Activated CD8-positive, alpha-beta T cell treated with anti-CD3 and anti-CD28 coated beads for 36 hours (primary cell): ENCODE measurements at regions of chr10 and their contacts with region 1.

Region 1: GRCh38 chr10:74035303-74035702 is 37.4 kb downstream of the VCL start:
- DNase-seq: no peak
- ATAC-seq: no peak
- H3K4me3 Mint-ChIP-seq: no peak overlapping the region
- H3K27ac Mint-ChIP-seq: no peak overlapping the region
- H3K4me1 Mint-ChIP-seq: peaks cover 22% of the 10 kb centered on the region
- H3K27me3 Mint-ChIP-seq: no peaks in the 10 kb centered on the region
- CTCF ChIP-seq: no peak

Region 2: DNA sequence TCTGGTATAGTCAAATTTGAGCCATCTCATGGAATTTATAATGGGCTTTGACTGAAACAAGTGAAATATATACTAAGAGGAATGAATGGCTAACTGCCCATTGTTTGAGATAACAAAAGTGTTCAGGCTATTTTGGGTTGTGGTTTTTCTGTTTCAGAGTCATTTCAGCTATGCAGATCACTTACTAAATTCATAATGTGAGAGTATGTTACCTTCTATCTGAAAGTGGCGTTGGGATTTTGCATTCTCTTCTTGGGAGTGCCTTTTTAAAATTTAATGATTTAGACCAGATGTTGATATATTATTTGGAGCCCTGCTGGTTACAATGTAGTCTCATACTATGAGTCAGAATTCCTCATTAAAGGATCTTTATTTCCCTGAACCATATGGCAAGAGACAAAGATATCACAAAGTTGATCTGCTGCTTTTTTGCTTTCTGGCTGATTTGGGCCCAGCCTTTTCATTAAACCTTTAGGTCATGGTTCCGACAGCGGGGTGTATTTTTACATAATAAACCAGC is 27.0 kb before region 1 on chr10:
- CTCF ChIA-PET with region 1: no interaction called
- POLR2A ChIA-PET with region 1: no interaction called
- intact Hi-C with region 1: no loop called
- DNase-seq: no peak
- ATAC-seq: no peak
- H3K4me3 Mint-ChIP-seq: no peak overlapping the region
- H3K27ac Mint-ChIP-seq: no peak overlapping the region
- H3K4me1 Mint-ChIP-seq: peaks cover 30% of the 10 kb centered on the region
- H3K27me3 Mint-ChIP-seq: no peaks in the 10 kb centered on the region
- CTCF ChIP-seq: no peak

Region 3: DNA sequence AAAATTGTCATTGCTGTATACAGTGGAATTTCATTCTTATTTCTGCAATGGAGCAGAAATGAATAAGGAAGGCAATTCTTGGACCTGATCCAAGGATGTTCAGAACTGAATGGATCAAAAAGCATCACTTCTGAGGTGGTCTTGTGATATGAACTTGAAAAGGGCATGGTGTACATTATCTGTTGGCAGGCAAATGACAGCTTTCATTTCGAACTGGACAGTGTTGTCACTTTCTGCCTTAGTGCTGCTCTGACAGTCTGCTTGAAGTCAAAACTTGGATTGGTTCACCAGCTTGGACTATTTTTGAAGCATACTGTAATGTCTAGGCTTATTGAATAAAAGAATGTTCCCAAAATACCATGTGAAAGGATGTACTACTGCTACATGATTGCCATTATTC is 14.7 kb after region 1 on chr10:
- CTCF ChIA-PET with region 1: interaction called, 12 read pairs
- POLR2A ChIA-PET with region 1: no interaction called
- intact Hi-C with region 1: no loop called
- DNase-seq: no peak
- ATAC-seq: no peak
- H3K4me3 Mint-ChIP-seq: no peak overlapping the region
- H3K27ac Mint-ChIP-seq: no peak overlapping the region
- H3K4me1 Mint-ChIP-seq: peaks cover 5% of the 10 kb centered on the region
- H3K27me3 Mint-ChIP-seq: no peaks in the 10 kb centered on the region
- CTCF ChIP-seq: no peak

Region 4: DNA sequence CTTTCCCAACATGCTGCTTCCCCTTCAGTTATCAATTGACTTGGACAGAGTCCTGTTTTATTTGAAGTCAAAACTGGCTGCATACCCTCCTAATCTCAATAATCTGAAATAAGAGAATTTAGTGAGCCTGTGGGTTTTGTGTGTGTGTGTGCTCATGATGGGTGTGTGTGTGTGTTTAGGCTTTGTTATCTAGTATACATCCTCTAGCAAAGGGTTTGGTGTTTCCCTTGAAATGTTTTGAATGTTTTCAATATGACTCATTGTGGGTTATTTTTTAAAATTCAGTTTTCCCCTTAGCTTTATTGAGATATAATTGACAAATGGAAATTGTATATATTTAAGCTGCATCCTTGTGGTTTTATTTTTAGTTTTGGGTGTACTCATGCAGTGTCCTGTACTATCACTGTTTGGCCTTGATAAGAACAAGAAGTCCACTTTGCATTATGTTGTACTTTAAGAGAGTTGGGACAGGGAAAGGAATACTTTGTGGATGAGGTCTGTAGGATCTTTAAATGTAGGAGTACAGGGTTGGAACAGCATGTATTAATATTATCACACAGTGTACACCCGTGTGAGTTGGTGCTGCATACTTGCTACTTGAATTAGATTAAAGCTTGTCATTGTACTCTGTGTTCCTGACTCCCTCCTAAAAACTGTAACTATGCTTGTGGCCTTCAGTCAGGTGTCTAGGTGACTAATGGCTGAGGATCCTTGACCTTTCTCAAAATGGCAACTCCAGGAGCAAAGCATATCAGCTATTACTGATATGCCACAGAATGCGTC is 20.9 kb after region 1 on chr10:
- CTCF ChIA-PET with region 1: interaction called, 10 read pairs
- POLR2A ChIA-PET with region 1: interaction called, 4 read pairs
- intact Hi-C with region 1: no loop called
- DNase-seq: peak; percentile 38
- ATAC-seq: peak; percentile 83
- H3K4me3 Mint-ChIP-seq: peak overlapping the region; percentile 46
- H3K27ac Mint-ChIP-seq: peak overlapping the region; percentile 89
- H3K4me1 Mint-ChIP-seq: peaks cover 30% of the 10 kb centered on the region
- H3K27me3 Mint-ChIP-seq: no peaks in the 10 kb centered on the region
- CTCF ChIP-seq: no peak